Endothelial cell of umbilical vein (primary cell): ENCODE measurements at regions of chr20 and their contacts with region 1.

Region 1: GRCh38 chr20:31605031-31605901 is at the start of gene ID1:
- DNase-seq: peak; percentile 95
- H3K4me3 ChIP-seq: peak within 1 kb of the TSS; percentile 44 to 94 (median 68)
- H3K27ac ChIP-seq: peak within 1 kb of the TSS; percentile 100
- H3K4me1 ChIP-seq: peaks cover 51% of the 10 kb centered on the region
- H3K27me3 ChIP-seq: no peaks in the 10 kb centered on the region
- CTCF ChIP-seq: no peak
- POLR2A ChIP-seq: peak; percentile 99
- total RNA-seq, gene ID1: 64.4 and 78.9 TPM in 2 replicates

Region 2: GRCh38 chr20:31560094-31560899 is 45.0 kb before region 1 on chr20:
- CTCF ChIA-PET with region 1: interaction called, 1,817 read pairs
- POLR2A ChIA-PET with region 1: interaction called, 12 read pairs
- dilution Hi-C with region 1: no loop called
- intact Hi-C with region 1: no loop called
- DNase-seq: peak; percentile 79
- H3K4me3 ChIP-seq: no peak overlapping the region
- H3K27ac ChIP-seq: peak overlapping the region; percentile 100
- H3K4me1 ChIP-seq: peaks cover 35% of the 10 kb centered on the region
- H3K27me3 ChIP-seq: no peaks in the 10 kb centered on the region
- CTCF ChIP-seq: peak; percentile 90 to 97
- POLR2A ChIP-seq: peak; percentile 41

Region 3: GRCh38 chr20:31572701-31573554 is 32.3 kb before region 1 on chr20:
- CTCF ChIA-PET with region 1: interaction called, 1,817 read pairs
- POLR2A ChIA-PET with region 1: interaction called, 48 read pairs
- dilution Hi-C with region 1: no loop called
- intact Hi-C with region 1: loop called (anchors 1 kb)
- DNase-seq: peak; percentile 99
- H3K4me3 ChIP-seq: peak overlapping the region; percentile 22 to 52 (median 31)
- H3K27ac ChIP-seq: peak overlapping the region; percentile 94
- H3K4me1 ChIP-seq: peaks cover 36% of the 10 kb centered on the region
- H3K27me3 ChIP-seq: no peaks in the 10 kb centered on the region
- CTCF ChIP-seq: no peak
- POLR2A ChIP-seq: peak; percentile 92

Region 4: DNA sequence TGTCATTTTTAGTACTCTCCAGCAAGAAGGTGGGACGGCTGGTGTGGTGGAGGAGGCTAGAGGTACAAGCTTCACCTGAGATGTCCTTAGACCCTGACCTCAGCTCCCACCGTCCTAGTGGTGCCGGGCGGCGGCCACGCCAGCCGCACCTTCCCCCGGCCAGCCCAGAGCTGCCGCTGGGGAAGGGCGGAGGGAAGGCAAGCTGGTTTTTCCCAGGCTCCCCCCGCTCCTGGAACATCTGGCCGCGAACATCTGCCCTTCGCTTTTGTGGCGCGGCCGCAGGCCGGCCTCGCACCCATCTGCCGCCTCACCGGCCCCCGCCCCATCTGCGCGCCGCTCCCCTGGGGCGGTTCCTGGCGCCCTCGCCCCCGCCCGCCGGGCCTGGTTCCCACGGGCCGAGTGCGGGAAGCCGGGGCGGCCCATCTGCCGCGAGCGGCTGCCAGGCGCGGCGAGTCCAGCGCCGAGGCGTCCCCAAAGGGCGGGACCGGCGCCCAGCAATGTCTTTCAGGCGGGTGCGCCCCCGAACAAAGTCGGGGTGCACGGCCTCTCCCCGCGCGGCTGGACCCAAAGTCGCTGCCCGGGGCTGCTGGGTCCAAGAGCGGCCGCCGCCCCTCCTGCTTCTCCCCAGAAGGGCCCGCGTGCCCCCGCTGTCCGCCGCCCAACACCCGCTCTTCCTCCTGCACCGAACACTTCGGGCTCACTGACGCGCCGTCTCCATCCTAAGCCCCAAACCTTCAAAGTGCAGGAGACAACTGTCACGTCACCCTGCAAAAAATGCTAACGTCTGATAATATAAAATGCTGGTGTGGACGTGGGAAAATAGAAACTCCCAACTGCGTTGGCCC is 17.5 kb before region 1 on chr20:
- CTCF ChIA-PET with region 1: interaction called, 11 read pairs
- POLR2A ChIA-PET with region 1: interaction called, 17 read pairs
- dilution Hi-C with region 1: no loop called
- intact Hi-C with region 1: loop called (anchors 2 kb)
- DNase-seq: peak; percentile 36
- H3K4me3 ChIP-seq: peak overlapping the region; percentile 21 to 51 (median 38)
- H3K27ac ChIP-seq: no peak overlapping the region
- H3K4me1 ChIP-seq: peaks cover 6% of the 10 kb centered on the region
- H3K27me3 ChIP-seq: no peaks in the 10 kb centered on the region
- CTCF ChIP-seq: no peak
- POLR2A ChIP-seq: no peak

Region 5: DNA sequence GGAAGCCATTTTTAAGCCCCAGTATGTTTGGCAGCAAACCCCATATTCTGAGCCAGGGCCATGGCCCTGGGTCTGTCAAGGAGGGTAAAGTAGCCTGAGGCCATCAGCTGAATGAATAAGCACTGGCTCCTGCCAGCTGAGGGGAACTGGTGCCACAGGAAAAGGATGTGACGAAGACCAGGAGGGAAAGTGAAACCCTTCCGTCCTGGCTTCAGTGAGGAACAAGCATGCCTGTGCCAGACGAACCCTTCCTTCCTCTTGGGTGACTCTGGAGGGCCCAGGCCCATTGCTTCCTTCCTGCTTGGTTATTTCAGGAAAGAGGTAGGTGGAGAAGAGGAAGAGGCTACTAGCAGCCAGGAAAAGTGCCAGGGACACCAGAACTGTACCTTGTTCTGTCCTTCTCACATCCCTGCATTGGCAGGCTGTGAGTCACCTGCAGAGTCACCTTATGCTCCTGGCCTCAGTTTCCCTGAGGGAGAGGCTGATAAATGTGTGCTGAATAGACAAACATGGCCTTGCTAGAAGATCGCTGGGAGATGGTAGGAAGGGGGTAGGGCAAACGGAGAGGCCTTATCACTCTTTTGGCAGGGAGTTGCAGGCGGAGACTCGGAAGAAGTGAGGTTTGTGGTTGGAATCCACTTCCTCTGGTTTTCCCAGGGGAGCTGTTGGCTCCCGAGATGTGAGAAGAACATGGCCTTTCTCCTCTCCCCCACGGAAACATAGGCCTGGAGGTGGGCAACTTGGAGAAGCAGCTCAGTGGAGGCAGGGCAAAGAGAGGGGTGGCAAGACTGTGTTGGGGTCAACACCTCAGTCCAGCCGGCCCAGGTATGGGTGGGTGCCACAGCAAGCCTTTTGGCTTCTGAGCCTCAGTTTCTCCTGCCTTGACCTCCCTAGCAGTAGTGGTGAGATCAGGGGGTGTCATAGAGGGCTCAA is 69.9 kb after region 1 on chr20:
- CTCF ChIA-PET with region 1: no interaction called
- POLR2A ChIA-PET with region 1: no interaction called
- dilution Hi-C with region 1: no loop called
- intact Hi-C with region 1: loop called (anchors 2 kb)
- DNase-seq: peak; percentile 84
- H3K4me3 ChIP-seq: peak overlapping the region in 1 of 3 experiments; percentile 20
- H3K27ac ChIP-seq: peak overlapping the region; percentile 93
- H3K4me1 ChIP-seq: peaks cover 60% of the 10 kb centered on the region
- H3K27me3 ChIP-seq: no peaks in the 10 kb centered on the region
- CTCF ChIP-seq: no peak
- POLR2A ChIP-seq: peak; percentile 27

Region 6: GRCh38 chr20:31712564-31713311 is 107.5 kb after region 1 on chr20:
- CTCF ChIA-PET with region 1: no interaction called
- POLR2A ChIA-PET with region 1: no interaction called
- dilution Hi-C with region 1: no loop called
- intact Hi-C with region 1: loop called (anchors 1 kb)
- DNase-seq: peak; percentile 91
- H3K4me3 ChIP-seq: peak overlapping the region in 1 of 3 experiments; percentile 26
- H3K27ac ChIP-seq: peak overlapping the region; percentile 97
- H3K4me1 ChIP-seq: peaks cover 55% of the 10 kb centered on the region
- H3K27me3 ChIP-seq: no peaks in the 10 kb centered on the region
- CTCF ChIP-seq: no peak
- POLR2A ChIP-seq: no peak

Region 7: DNA sequence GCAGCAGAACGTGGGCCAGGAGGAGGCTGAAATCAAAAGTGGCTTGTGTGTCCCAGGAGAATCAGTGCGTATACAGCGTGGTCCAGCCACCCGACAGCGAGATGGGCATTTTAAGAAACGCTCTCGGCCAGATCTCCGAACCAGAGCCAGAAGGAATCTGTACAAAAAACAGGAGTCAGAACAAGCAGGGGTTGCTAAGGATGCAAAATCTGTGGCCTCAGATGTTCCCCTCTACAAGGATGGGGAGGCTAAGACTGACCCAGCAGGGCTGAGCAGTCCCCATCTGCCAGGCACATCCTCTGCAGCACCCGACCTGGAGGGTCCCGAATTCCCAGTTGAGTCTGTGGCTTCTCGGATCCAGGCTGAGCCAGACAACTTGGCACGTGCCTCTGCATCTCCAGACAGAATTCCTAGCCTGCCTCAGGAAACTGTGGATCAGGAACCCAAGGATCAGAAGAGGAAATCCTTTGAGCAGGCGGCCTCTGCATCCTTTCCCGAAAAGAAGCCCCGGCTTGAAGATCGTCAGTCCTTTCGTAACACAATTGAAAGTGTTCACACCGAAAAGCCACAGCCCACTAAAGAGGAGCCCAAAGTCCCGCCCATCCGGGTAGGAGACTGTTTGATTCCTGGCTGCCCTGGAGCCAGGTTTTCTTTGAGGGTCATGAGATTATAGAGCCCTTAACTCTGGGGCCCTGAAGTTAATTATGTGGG is 828.2 kb after region 1 on chr20:
- CTCF ChIA-PET with region 1: no interaction called
- POLR2A ChIA-PET with region 1: no interaction called
- dilution Hi-C with region 1: no loop called
- intact Hi-C with region 1: no loop called
- DNase-seq: peak; percentile 87
- H3K4me3 ChIP-seq: no peak overlapping the region
- H3K27ac ChIP-seq: peak overlapping the region; percentile 75
- H3K4me1 ChIP-seq: peaks cover 32% of the 10 kb centered on the region
- H3K27me3 ChIP-seq: no peaks in the 10 kb centered on the region
- CTCF ChIP-seq: no peak
- POLR2A ChIP-seq: peak; percentile 17